ENCODE measurements at regions of chr9 and their contacts with region 1.

Region 1: GRCh38 chr9:124776954-124777665 is at the start of gene OLFML2A:
- DNase-seq: peak in 3 of 5 donors; percentile 28 to 65 (median 57)
- H3K4me3 ChIP-seq: peak within 1 kb of the TSS; percentile 65
- H3K27ac ChIP-seq: peak within 1 kb of the TSS; percentile 63 to 80
- H3K4me1 ChIP-seq: peaks cover 13% of the 10 kb centered on the region
- H3K27me3 ChIP-seq: no peaks in the 10 kb centered on the region
- CTCF ChIP-seq: peak in 2 of 3 donors; percentile 24 to 54
- EP300 ChIP-seq: no peak
- POLR2A ChIP-seq: no peak
- total RNA-seq, gene OLFML2A: 14.7 to 63.4 (median 52.8) TPM

Region 2: DNA sequence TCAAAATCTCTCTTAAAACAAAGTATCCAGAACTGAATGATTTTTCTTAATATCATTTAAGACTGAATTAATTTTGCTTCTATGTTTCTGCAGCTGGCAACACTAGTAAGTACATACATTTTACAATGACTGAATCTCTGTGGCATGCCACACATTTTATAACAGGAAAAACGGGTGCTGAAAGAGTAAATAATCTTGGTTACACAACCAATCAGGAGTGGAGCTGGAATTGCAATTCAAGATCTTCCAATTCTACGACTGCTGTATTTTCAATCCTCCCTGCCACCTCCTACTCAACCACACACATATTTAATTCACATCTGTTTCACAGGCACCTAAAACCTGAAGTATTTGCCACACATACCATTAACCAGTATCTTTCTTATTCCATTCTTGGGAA is 217.2 kb before region 1 on chr9:
- intact Hi-C with region 1: no loop called
- DNase-seq: no peak
- H3K4me3 ChIP-seq: no peak overlapping the region
- H3K27ac ChIP-seq: no peak overlapping the region
- H3K4me1 ChIP-seq: no peaks in the 10 kb centered on the region
- H3K27me3 ChIP-seq: no peaks in the 10 kb centered on the region
- CTCF ChIP-seq: no peak
- EP300 ChIP-seq: no peak
- POLR2A ChIP-seq: no peak

Region 3: GRCh38 chr9:124839612-124840299 is 62.6 kb after region 1 on chr9:
- intact Hi-C with region 1: loop called in 1 of 4 experiments (anchors 5 kb)
- DNase-seq: peak in 1 of 5 donors; percentile 26
- H3K4me3 ChIP-seq: no peak overlapping the region
- H3K27ac ChIP-seq: no peak overlapping the region
- H3K4me1 ChIP-seq: peaks cover 8% of the 10 kb centered on the region
- H3K27me3 ChIP-seq: no peaks in the 10 kb centered on the region
- CTCF ChIP-seq: peak in 2 of 3 donors; percentile 10 to 33
- EP300 ChIP-seq: no peak
- POLR2A ChIP-seq: no peak

Region 4: GRCh38 chr9:124852829-124853531 is 75.9 kb after region 1 on chr9 and contains the start of gene WDR38:
- intact Hi-C with region 1: loop called (anchors 1 to 2 kb)
- DNase-seq: peak; percentile 60 to 85 (median 75)
- H3K4me3 ChIP-seq: peak within 1 kb of the TSS; percentile 31
- H3K27ac ChIP-seq: peak within 1 kb of the TSS; percentile 8 to 36
- H3K4me1 ChIP-seq: peaks cover 4% of the 10 kb centered on the region
- H3K27me3 ChIP-seq: no peaks in the 10 kb centered on the region
- CTCF ChIP-seq: peak; percentile 99 to 100 (median 99)
- EP300 ChIP-seq: no peak
- POLR2A ChIP-seq: peak; percentile 25
- total RNA-seq, gene WDR38: 0.94 to 22.5 (median 1.4) TPM in 4 of 7 donors, not detected in the others

Region 5: GRCh38 chr9:125308683-125309082 is 531.6 kb after region 1 on chr9:
- intact Hi-C with region 1: no loop called
- DNase-seq: no peak
- H3K4me3 ChIP-seq: no peak overlapping the region
- H3K27ac ChIP-seq: no peak overlapping the region
- H3K4me1 ChIP-seq: no peaks in the 10 kb centered on the region
- H3K27me3 ChIP-seq: no peaks in the 10 kb centered on the region
- CTCF ChIP-seq: no peak
- EP300 ChIP-seq: no peak
- POLR2A ChIP-seq: no peak

Measured in ovary (tissue), 10 donors.